ENCODE measurements at regions of chr1 and their contacts with region 1.

Region 1: DNA sequence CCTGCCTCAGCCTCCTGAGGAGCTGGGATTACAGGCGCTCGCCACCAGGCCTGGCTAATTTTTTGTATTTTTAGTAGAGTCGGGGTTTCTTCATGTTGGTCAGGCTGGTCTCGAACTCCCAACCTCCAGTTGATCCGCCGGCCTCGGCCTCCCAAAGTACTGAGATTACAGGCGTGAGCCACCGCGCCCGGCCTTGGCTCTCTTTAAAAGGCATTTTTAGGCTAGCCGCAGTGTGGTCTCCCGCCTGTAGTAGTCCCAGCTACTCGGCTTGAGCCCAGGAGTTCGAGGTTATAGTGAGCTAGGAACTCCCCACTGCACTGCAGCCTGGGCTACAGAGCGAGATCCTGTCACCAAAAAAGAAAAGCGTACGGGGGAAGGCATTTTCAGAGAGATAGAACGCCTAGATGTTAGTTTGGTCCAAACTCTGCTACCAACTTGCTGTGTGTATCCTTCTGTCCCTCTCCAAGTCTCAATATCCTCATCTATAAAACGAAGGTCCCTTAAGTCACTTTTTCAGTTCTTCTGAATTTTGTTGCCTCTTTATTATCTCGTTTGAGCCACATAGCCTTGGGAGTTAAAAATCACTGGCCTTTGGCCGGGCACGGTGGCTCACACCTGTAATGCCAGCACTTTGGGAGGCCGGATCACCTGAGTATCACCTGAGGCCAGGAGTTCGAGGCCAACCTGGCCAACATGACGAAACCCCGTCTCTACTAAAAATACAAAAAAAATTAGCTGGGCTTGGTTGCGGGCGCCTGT is 734 bp downstream of the MED18 start:
- DNase-seq: no peak
- H3K4me3 ChIP-seq: peak overlapping the region; percentile 51 to 53
- H3K4me3 Mint-ChIP-seq: peak overlapping the region; percentile 94 to 96 (median 95)
- H3K27ac ChIP-seq: peak overlapping the region; percentile 84
- H3K27ac Mint-ChIP-seq: peak overlapping the region; percentile 97 to 100 (median 99)
- H3K4me1 ChIP-seq: peaks cover 29% of the 10 kb centered on the region
- H3K4me1 Mint-ChIP-seq: peaks cover 19 to 39% (median 26%) of the 10 kb centered on the region in 4 donors
- H3K27me3 ChIP-seq: no peaks in the 10 kb centered on the region
- H3K27me3 Mint-ChIP-seq: peaks cover 0 to 2% of the 10 kb centered on the region in 2 donors

Region 2: GRCh38 chr1:28235755-28236655 is 93.6 kb before region 1 on chr1 and contains the start of gene ATP5IF1:
- CTCF ChIA-PET with region 1: no interaction called
- POLR2A ChIA-PET with region 1: interaction called, 47 read pairs
- intact Hi-C with region 1: no loop called
- DNase-seq: peak; percentile 92 to 97 (median 95)
- H3K4me3 ChIP-seq: peak within 1 kb of the TSS; percentile 82 to 97
- H3K4me3 Mint-ChIP-seq: peak within 1 kb of the TSS in 2 of 8 donors; percentile 35 to 57
- H3K27ac ChIP-seq: peak within 1 kb of the TSS; percentile 86
- H3K27ac Mint-ChIP-seq: peak within 1 kb of the TSS in 1 of 7 donors; percentile 18
- H3K4me1 ChIP-seq: peaks cover 56% of the 10 kb centered on the region
- H3K4me1 Mint-ChIP-seq: peaks cover 8 to 30% (median 13%) of the 10 kb centered on the region in 4 donors
- H3K27me3 ChIP-seq: no peaks in the 10 kb centered on the region
- H3K27me3 Mint-ChIP-seq: no peaks in the 10 kb centered on the region
- total RNA-seq, gene ATP5IF1: 111 TPM

Region 3: DNA sequence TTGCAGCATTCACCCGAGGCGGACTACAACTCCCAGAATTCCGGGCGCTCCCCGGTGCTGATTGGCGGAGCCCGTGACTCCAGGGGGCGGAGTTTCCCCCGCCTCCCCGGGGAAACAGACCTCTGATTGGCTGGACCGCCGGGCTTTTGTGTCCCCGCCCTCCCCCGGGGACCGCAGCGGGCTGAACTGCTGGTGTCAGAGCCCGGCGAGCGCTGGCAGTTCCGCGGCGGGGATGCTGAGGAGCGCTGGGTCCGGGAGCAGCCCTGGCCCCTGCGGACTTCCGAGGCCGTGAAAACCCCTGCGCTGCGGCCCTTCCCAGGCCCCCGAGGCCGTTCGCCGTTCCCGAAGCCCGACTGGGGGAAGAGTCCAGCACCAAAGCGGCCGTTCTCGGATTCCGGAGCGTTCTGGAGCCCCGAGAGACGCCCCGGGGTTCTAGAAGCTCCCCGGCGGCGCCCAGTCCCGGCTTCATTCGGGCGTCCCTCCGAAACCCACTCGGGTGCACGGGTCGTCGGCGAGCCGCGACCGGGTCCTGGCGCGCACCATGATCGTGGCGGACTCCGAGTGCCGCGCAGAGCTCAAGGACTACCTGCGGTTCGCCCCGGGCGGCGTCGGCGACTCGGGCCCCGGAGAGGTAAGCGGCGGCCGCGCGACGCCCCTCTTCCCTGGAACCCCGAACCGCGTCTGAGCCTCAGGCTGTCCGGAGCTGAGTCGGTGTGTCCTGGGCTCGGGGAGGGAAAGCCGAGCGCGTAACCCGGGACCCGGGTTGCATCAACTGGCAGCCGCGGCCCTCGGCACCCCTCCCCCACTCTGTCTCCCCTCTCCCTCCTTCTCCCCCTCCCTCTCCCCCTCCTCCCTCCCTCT is 70.0 kb before region 1 on chr1 and contains the start of gene SESN2:
- CTCF ChIA-PET with region 1: interaction called, 4 read pairs
- POLR2A ChIA-PET with region 1: interaction called, 89 read pairs
- intact Hi-C with region 1: loop called (anchors 1 kb)
- DNase-seq: peak; percentile 99
- H3K4me3 ChIP-seq: peak within 1 kb of the TSS; percentile 69 to 82
- H3K4me3 Mint-ChIP-seq: peak within 1 kb of the TSS; percentile 77 to 90 (median 82)
- H3K27ac ChIP-seq: peak within 1 kb of the TSS; percentile 67
- H3K27ac Mint-ChIP-seq: peak within 1 kb of the TSS; percentile 72 to 88 (median 84)
- H3K4me1 ChIP-seq: peaks cover 59% of the 10 kb centered on the region
- H3K4me1 Mint-ChIP-seq: peaks cover 29 to 58% (median 43%) of the 10 kb centered on the region in 4 donors
- H3K27me3 ChIP-seq: no peaks in the 10 kb centered on the region
- H3K27me3 Mint-ChIP-seq: no peaks in the 10 kb centered on the region
- total RNA-seq, gene SESN2: 5.7 to 6.4 TPM

Region 4: GRCh38 chr1:28369371-28370238 is 40.0 kb after region 1 on chr1 and contains the start of gene PHACTR4:
- CTCF ChIA-PET with region 1: no interaction called
- POLR2A ChIA-PET with region 1: interaction called, 4 read pairs
- intact Hi-C with region 1: loop called (anchors 1 kb)
- DNase-seq: peak; percentile 67 to 83 (median 72)
- H3K4me3 ChIP-seq: peak within 1 kb of the TSS; percentile 63 to 87
- H3K4me3 Mint-ChIP-seq: peak within 1 kb of the TSS; percentile 94 to 97 (median 96)
- H3K27ac ChIP-seq: peak within 1 kb of the TSS; percentile 84
- H3K27ac Mint-ChIP-seq: peak within 1 kb of the TSS; percentile 91 to 97 (median 94)
- H3K4me1 ChIP-seq: peaks cover 36% of the 10 kb centered on the region
- H3K4me1 Mint-ChIP-seq: peaks cover 21 to 45% (median 34%) of the 10 kb centered on the region in 4 donors
- H3K27me3 ChIP-seq: no peaks in the 10 kb centered on the region
- H3K27me3 Mint-ChIP-seq: no peaks in the 10 kb centered on the region
- total RNA-seq, gene PHACTR4: 27.1 to 28.8 TPM

Region 5: DNA sequence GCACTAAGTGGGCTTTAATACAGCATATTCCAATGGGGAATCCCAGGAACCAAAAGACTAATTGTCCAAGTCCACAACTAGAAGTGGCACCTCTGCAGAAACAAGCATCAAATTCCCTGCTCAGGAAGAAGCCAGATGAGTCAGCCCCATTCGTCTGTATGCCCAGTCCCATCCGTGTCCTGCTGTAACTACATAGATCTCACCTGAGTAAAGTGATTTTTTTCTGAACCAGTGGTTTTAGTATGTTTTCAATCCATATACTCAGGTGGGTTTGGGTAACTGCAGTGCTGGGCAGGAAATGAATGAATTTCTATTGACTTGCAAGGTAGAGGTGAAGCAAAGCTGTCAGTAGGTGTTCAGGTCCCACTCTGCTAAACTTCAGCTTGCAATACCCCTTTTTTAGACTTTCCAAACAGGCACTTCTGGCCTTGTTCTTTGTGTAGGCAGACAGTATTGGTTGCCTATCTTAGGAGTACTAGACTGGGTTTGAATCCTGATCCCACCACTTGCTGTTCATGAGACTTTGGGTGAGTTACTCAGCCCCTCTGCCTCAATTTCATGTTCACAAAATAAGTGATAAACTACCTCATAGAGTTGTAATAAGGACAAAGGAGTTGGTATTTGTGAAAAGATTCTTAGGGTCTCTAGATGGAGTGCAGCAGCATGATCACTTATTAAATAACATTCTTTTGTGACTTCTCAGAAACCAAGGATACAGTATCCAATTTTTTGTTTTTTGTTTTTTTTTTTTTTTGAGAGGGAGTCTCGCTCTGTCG is 181.3 kb after region 1 on chr1:
- CTCF ChIA-PET with region 1: no interaction called
- POLR2A ChIA-PET with region 1: interaction called, 10 read pairs
- intact Hi-C with region 1: no loop called
- DNase-seq: peak in 3 of 5 donors; percentile 27 to 44 (median 30)
- H3K4me3 ChIP-seq: peak overlapping the region in 1 of 2 donors; percentile 96
- H3K4me3 Mint-ChIP-seq: peak overlapping the region; percentile 94 to 100 (median 98)
- H3K27ac ChIP-seq: peak overlapping the region; percentile 66
- H3K27ac Mint-ChIP-seq: peak overlapping the region; percentile 85 to 99 (median 91)
- H3K4me1 ChIP-seq: peaks cover 67% of the 10 kb centered on the region
- H3K4me1 Mint-ChIP-seq: peaks cover 35 to 68% (median 47%) of the 10 kb centered on the region in 4 donors
- H3K27me3 ChIP-seq: no peaks in the 10 kb centered on the region
- H3K27me3 Mint-ChIP-seq: no peaks in the 10 kb centered on the region